Posterior cingulate gyrus (tissue), 11 donors: ENCODE measurements at regions of chr15 and their contacts with region 1.

Region 1: GRCh38 chr15:65638681-65639089 is 16.9 kb downstream of the SLC24A1 start:
- DNase-seq: peak in 2 of 10 donors; percentile 13 to 37

Region 2: DNA sequence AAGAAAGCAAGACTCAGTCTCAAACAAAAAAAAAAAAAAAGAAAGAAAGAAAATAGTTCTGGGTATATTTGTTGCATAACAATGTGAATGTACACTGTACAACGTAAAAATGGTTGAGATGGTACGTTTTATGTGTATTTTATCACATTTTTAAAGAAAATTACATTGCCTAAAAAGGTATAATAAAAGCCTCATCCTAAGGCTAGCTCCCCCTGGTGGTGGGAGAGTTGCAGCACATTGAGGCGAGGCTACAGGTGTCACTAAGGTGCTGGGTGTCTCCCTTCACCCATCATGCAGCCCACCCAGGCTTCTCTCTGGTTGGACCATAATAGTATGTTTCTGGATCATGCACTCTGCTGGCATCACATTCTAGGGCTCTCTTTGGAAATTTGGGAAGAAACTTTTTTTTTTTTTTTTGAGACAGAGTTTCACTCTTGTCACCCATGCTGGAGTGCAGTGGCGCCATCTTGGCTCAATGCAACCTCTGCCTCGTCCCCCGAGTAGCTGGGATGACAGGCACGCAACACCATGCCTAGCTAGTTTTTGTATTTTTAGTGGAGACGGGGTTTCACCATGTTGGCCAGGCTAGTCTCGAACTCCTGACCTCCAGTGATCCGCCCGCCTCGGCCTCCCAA is 218.3 kb after region 1 on chr15:
- intact Hi-C with region 1: loop called (anchors 2 kb)
- DNase-seq: peak in 6 of 10 donors; percentile 22 to 84 (median 44)